Lower leg skin (tissue), 4 donors: ENCODE measurements at regions of chr15 and their contacts with region 1.

Region 1: DNA sequence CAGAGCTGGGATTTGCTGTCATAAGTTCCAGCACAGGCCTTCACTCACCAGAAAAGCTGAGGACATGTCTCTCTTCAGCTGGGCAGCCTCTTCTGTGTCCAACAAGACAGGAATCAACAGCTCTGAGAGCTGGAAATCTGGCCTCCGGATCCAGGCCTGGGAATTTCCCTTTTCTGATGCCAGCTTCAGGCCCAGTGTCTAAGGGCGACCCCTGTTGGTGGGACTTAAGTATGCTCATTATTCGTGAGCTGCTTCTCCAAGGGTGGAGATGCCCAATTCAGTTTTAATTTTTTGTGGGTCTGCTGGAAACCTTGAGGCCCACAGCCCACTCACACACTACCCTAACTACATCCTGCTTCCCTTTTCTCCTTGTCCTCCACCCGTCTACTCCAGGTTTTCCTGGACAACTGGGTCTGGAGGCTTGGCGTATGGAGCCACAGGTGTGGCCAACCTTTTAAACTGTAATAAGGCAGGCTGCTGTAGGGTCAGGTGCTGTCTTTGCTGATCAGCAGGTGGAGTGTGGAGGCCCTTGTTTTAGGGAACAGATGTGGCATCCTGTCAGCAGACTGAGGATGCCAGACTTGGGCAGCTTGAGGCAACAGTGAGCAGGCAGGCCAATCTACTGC is 2.6 kb upstream of the CEMIP start:
- DNase-seq: peak in 1 of 2 donors; percentile 51
- H3K4me3 ChIP-seq: no peak overlapping the region
- CTCF ChIP-seq: peak in 1 of 3 donors; percentile 68
- POLR2A ChIP-seq: no peak

Region 2: DNA sequence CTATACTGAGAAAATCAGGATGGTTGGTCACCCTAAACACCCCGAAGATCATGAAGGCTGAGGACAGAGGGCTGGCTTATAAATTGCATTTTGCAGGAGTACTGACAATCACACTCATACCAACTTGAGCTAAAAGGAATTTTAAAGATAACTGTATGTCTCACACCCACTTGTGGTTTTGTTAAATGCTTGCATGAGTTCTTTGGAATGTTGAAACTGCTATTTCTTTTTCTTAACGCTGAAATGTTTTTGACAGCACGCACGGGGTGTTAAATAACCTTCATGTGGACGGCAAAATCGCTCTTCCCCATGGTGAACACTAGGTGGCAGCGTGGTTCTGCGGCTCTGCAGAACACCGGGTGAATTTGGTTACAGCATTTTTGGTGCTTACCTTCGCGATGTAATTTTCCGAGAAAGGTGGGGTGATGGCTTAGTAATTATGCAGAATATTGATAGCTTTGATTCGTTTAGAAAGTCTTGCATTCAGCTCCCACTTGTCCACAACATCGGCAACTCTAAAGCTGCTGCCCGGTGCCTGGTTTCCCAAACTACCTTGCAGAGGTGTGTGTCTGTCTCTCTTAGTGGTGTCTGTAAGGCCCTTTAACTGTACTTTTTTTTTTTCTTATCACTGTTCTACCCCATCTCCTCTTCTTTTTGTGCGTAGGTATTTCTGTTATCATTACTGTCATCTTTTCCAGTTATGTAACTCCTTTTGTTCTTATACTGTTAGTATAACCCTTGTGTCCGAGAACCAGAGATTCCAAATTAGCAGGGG is 320.7 kb before region 1 on chr15:
- intact Hi-C with region 1: loop called (anchors 2 kb)
- DNase-seq: peak in 1 of 2 donors; percentile 66
- H3K4me3 ChIP-seq: no peak overlapping the region
- CTCF ChIP-seq: peak in 1 of 3 donors; percentile 93
- POLR2A ChIP-seq: no peak

Region 3: GRCh38 chr15:80567721-80568157 is 208.8 kb before region 1 on chr15:
- intact Hi-C with region 1: loop called (anchors 2 kb)
- DNase-seq: peak; percentile 55 to 84
- H3K4me3 ChIP-seq: no peak overlapping the region
- CTCF ChIP-seq: peak in 1 of 3 donors; percentile 66
- POLR2A ChIP-seq: no peak

Region 4: DNA sequence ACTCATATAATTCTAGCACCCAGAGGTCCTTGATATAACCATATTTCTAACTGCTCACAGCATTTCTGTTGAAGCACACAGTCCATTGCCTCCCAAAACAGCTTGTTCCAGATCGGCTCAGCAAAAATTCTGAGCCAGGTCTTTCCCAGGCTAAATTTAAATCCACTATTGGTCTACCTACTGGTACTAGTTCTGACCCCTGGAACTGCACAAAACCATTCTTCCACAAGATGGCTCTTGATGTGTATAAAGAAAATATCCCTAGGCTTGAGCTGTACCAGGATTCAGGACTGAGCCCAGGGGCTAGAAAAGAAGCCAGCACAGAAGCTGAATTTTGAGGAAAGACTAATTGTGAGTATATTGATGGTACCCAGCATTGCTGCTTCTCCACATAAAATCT is 156.9 kb before region 1 on chr15:
- intact Hi-C with region 1: loop called (anchors 10 kb)
- DNase-seq: no peak
- H3K4me3 ChIP-seq: no peak overlapping the region
- CTCF ChIP-seq: no peak
- POLR2A ChIP-seq: no peak

Region 5: DNA sequence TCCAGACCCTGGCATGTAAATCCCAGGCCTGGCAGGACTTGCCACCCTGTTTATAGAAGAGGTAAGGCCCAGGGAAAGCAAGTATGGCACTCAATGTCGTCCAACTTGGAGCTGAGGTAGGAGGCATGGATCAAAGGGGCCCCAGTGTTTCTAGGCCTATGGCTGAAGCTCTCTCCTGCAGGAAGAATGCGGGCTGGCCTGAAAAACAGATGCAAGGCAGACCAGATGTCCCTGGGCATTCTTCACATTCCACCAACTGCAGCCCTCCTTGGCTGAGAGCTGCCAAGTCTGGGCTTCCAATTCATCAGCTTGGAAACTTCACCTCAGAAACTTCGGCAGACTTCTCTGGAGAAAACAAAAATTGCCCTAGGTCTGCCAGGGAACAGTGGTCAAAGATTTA is 190.9 kb after region 1 on chr15:
- intact Hi-C with region 1: loop called (anchors 10 kb)
- DNase-seq: peak in 1 of 2 donors; percentile 34
- H3K4me3 ChIP-seq: no peak overlapping the region
- CTCF ChIP-seq: no peak
- POLR2A ChIP-seq: no peak